ENCODE measurements at regions of chr3 and their contacts with region 1.

Region 1: GRCh38 chr3:120795017-120795648 is 52.6 kb downstream of the GTF2E1 start:
- DNase-seq: peak; percentile 79
- H3K4me3 ChIP-seq: peak overlapping the region; percentile 10
- H3K27ac ChIP-seq: peak overlapping the region; percentile 24
- H3K4me1 ChIP-seq: peaks cover 44% of the 10 kb centered on the region
- CTCF ChIP-seq: peak; percentile 96

Region 2: DNA sequence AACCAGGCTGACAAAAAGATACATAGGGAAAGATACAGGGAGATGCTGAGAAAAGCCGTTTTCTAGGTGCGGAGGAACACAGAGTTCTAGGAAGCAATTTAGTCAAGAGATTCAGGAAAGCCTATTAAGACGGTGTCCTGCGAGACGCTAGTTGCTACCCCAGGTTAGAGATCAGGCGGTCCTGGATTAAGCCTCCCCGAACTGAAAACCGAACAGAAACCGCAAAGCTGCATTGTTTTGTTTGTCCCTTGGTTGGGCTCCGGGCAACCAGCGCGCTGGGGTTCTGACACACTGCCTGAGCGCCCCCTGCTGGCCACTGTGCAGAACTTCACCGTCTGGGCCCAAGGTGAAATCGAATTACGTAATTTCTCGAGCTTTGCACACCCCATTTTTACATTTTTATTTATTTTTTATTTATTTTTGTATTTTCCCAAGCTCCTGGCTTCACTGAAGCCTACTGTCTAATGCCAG is 236.3 kb before region 1 on chr3:
- CTCF ChIA-PET with region 1: no interaction called
- POLR2A ChIA-PET with region 1: no interaction called
- intact Hi-C with region 1: loop called (anchors 1 kb)
- DNase-seq: peak; percentile 84
- H3K4me3 ChIP-seq: peak overlapping the region; percentile 64
- H3K27ac ChIP-seq: no peak overlapping the region
- H3K4me1 ChIP-seq: peaks cover 3% of the 10 kb centered on the region
- CTCF ChIP-seq: peak; percentile 94

Region 3: GRCh38 chr3:120596116-120596852 is 198.8 kb before region 1 on chr3 and contains the start of gene NDUFB4:
- CTCF ChIA-PET with region 1: no interaction called
- POLR2A ChIA-PET with region 1: interaction called, 3 read pairs
- intact Hi-C with region 1: loop called (anchors 10 kb)
- DNase-seq: peak; percentile 99
- H3K4me3 ChIP-seq: peak within 1 kb of the TSS; percentile 83
- H3K27ac ChIP-seq: peak within 1 kb of the TSS; percentile 61
- H3K4me1 ChIP-seq: peaks cover 16% of the 10 kb centered on the region
- CTCF ChIP-seq: no peak
- total RNA-seq, gene NDUFB4: 77.3 and 130 TPM in 2 replicates

Region 4: DNA sequence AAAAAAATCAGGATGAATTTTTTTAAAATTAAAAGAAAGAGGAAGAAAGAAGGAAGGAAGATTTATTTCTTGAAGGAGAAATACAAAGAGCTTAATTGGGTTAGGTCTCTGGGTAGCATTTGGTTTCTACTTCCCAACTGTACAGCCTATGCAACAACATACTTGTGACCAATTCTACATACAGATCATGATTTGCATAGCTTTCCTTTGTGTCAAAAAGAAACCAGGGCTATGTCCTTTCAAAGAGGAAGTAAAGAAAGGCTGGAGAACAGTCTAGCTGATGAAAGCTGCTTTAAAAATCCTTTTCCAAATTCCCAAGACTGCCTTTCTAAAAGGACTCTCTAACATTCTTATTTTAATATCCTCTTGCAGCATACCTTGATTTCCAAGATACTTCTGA is 107.0 kb before region 1 on chr3:
- CTCF ChIA-PET with region 1: no interaction called
- POLR2A ChIA-PET with region 1: interaction called, 3 read pairs
- intact Hi-C with region 1: loop called (anchors 5 kb)
- DNase-seq: peak; percentile 43
- H3K4me3 ChIP-seq: no peak overlapping the region
- H3K27ac ChIP-seq: no peak overlapping the region
- H3K4me1 ChIP-seq: peaks cover 10% of the 10 kb centered on the region
- CTCF ChIP-seq: no peak

Region 5: GRCh38 chr3:120742198-120742849 is 52.8 kb before region 1 on chr3 and contains the starts of genes GTF2E1 and RABL3:
- CTCF ChIA-PET with region 1: no interaction called
- POLR2A ChIA-PET with region 1: no interaction called
- intact Hi-C with region 1: loop called (anchors 5 kb)
- DNase-seq: peak; percentile 99
- H3K4me3 ChIP-seq: peak within 1 kb of the TSS; percentile 99
- H3K27ac ChIP-seq: peak within 1 kb of the TSS; percentile 86
- H3K4me1 ChIP-seq: peaks cover 25% of the 10 kb centered on the region
- CTCF ChIP-seq: no peak
- total RNA-seq, gene GTF2E1: 14.8 and 16.3 TPM in 2 replicates
- total RNA-seq, gene RABL3: 7.7 and 15.7 TPM in 2 replicates